Activated CD8-positive, alpha-beta memory T cell treated with anti-CD3 and anti-CD28 coated beads, Interleukin-2, amount 10 ng/mL, durations not matched to agents 7 days and 5 days (primary cell): ENCODE measurements at regions of chr20 and their contacts with region 1.

Region 1: GRCh38 chr20:58880441-58880840 is 27.9 kb downstream of the GNAS start:
- DNase-seq: no peak
- ATAC-seq: no peak
- H3K4me3 Mint-ChIP-seq: no peak overlapping the region
- H3K27ac Mint-ChIP-seq: no peak overlapping the region
- H3K4me1 Mint-ChIP-seq: peaks cover 23% of the 10 kb centered on the region
- H3K27me3 Mint-ChIP-seq: no peaks in the 10 kb centered on the region

Region 2: GRCh38 chr20:58612121-58612691 is 268.2 kb before region 1 on chr20:
- CTCF ChIA-PET with region 1: no interaction called
- DNase-seq: no peak
- ATAC-seq: no peak
- H3K4me3 Mint-ChIP-seq: no peak overlapping the region
- H3K27ac Mint-ChIP-seq: no peak overlapping the region
- H3K4me1 Mint-ChIP-seq: no peaks in the 10 kb centered on the region
- H3K27me3 Mint-ChIP-seq: no peaks in the 10 kb centered on the region

Region 3: DNA sequence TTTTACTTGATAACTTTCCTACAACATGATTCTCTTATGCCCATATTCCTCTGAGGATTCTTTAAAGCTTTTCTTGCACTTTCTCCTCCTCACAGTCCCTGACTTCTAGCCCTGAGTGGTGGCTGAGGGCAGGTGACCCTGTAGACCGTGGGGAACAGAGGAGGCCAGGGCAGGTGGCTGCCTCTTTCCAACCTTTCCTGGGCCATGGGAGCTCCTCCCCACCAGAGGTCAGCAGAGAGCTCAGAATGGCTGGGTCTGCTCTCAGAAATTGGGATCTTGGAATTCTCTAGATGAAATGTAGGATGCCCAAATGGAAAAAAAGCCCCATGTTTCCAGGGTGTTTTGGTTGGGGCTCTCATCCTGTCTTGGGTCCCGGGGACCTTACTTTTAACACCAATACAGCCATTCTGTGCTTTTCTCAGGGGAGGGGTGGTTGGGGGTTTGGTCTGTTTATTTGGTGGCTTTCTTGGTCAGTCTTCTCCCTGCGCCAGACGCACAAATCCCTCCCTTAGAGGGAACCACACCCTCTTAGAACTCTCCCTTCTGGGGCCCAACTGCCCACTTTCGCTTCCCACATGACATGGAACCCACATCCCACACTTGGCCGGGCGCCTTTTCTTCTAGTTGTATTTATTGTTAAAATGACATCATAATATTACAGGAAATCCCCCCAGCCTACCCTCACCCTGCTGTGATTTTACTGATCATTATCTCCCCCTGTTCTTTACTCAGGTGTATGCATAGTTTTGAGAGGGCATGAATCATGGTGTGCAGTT is 10.0 kb before region 1 on chr20:
- CTCF ChIA-PET with region 1: interaction called, 10 read pairs
- DNase-seq: peak; percentile 66
- ATAC-seq: peak; percentile 81
- H3K4me3 Mint-ChIP-seq: no peak overlapping the region
- H3K27ac Mint-ChIP-seq: no peak overlapping the region
- H3K4me1 Mint-ChIP-seq: peaks cover 18% of the 10 kb centered on the region
- H3K27me3 Mint-ChIP-seq: peaks cover 22% of the 10 kb centered on the region